CD8-positive, alpha-beta T cell (primary cell): ENCODE measurements at regions of chr3 and their contacts with region 1.

Region 1: GRCh38 chr3:158185711-158186110 is 75.8 kb downstream of the RSRC1 start:
- DNase-seq: no peak
- ATAC-seq: no peak
- H3K4me3 ChIP-seq: no peak overlapping the region
- H3K4me3 Mint-ChIP-seq: no peak overlapping the region
- H3K27ac ChIP-seq: no peak overlapping the region
- H3K27ac Mint-ChIP-seq: no peak overlapping the region
- H3K4me1 ChIP-seq: no peaks in the 10 kb centered on the region
- H3K4me1 Mint-ChIP-seq: peaks cover 7% of the 10 kb centered on the region
- H3K27me3 ChIP-seq: no peaks in the 10 kb centered on the region
- H3K27me3 Mint-ChIP-seq: no peaks in the 10 kb centered on the region
- CTCF ChIP-seq: no peak

Region 2: DNA sequence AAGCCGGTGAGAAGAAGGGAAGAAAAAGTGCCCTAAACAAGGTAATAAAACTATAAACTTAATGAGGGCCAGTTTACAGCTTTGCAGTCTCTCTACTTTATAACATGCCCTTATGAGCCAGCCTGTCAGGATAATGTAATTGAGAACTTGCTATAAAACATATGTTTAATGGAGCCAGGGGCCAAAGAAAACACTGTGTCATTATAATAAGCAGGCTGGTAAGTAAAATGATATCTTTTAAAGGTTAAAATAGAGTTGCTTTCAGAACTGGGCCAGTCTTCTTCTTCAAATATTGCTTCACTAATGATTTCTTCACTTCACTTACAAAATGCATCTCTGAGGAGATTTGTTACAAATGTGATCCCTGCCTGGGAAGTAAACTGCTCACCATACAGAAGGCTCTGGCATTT is 272.0 kb before region 1 on chr3:
- CTCF ChIA-PET with region 1: no interaction called
- POLR2A ChIA-PET with region 1: no interaction called
- intact Hi-C with region 1: no loop called
- DNase-seq: no peak
- ATAC-seq: no peak
- H3K4me3 ChIP-seq: no peak overlapping the region
- H3K4me3 Mint-ChIP-seq: no peak overlapping the region
- H3K27ac ChIP-seq: no peak overlapping the region
- H3K27ac Mint-ChIP-seq: no peak overlapping the region
- H3K4me1 ChIP-seq: no peaks in the 10 kb centered on the region
- H3K4me1 Mint-ChIP-seq: no peaks in the 10 kb centered on the region
- H3K27me3 ChIP-seq: no peaks in the 10 kb centered on the region
- H3K27me3 Mint-ChIP-seq: no peaks in the 10 kb centered on the region
- CTCF ChIP-seq: no peak

Region 3: DNA sequence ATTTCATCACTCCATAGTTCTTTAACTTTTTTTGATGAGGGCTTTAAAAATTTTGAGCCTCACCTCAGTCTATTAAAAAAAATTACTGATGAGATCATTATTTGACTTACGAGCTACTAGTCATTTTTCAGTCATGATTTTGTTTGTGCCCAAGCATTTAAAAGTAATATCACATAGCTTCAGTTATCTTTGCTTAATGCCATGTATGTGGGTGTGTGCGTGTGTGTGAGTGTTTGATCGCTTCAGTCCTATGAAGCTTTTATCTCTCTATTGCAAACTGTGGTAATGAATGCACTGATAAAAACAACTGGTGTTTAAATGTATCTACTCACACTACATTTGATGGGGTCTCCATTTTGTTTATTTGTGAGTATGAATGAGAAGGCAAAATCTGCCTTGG is 26.0 kb before region 1 on chr3:
- CTCF ChIA-PET with region 1: interaction called, 3 read pairs
- POLR2A ChIA-PET with region 1: no interaction called
- intact Hi-C with region 1: loop called in 1 of 2 experiments (anchors 2 kb)
- DNase-seq: no peak
- ATAC-seq: no peak
- H3K4me3 ChIP-seq: no peak overlapping the region
- H3K4me3 Mint-ChIP-seq: no peak overlapping the region
- H3K27ac ChIP-seq: no peak overlapping the region
- H3K27ac Mint-ChIP-seq: no peak overlapping the region
- H3K4me1 ChIP-seq: no peaks in the 10 kb centered on the region
- H3K4me1 Mint-ChIP-seq: peaks cover 6% of the 10 kb centered on the region
- H3K27me3 ChIP-seq: no peaks in the 10 kb centered on the region
- H3K27me3 Mint-ChIP-seq: no peaks in the 10 kb centered on the region
- CTCF ChIP-seq: no peak